Activated CD4-positive, alpha-beta T cell treated with anti-CD3 and anti-CD28 coated beads for 36 hours (primary cell): ENCODE measurements at regions of chr5 and their contacts with region 1.

Region 1: GRCh38 chr5:69334793-69335268 is 2.2 kb upstream of the CCDC125 start:
- DNase-seq: peak; percentile 91
- ATAC-seq: peak; percentile 78
- H3K4me3 Mint-ChIP-seq: no peak overlapping the region
- H3K27ac Mint-ChIP-seq: no peak overlapping the region
- H3K4me1 Mint-ChIP-seq: peaks cover 15% of the 10 kb centered on the region
- H3K27me3 Mint-ChIP-seq: no peaks in the 10 kb centered on the region

Region 2: GRCh38 chr5:68215208-68215897 is 1119.5 kb before region 1 on chr5 and contains the start of gene PIK3R1:
- CTCF ChIA-PET with region 1: no interaction called
- POLR2A ChIA-PET with region 1: no interaction called
- intact Hi-C with region 1: loop called in 1 of 2 experiments (anchors 10 kb)
- DNase-seq: peak; percentile 96
- ATAC-seq: peak; percentile 85
- H3K4me3 Mint-ChIP-seq: peak within 1 kb of the TSS; percentile 83
- H3K27ac Mint-ChIP-seq: peak within 1 kb of the TSS; percentile 97
- H3K4me1 Mint-ChIP-seq: peaks cover 45% of the 10 kb centered on the region
- H3K27me3 Mint-ChIP-seq: no peaks in the 10 kb centered on the region
- total RNA-seq, gene PIK3R1: 40.0 to 49.0 TPM

Region 3: GRCh38 chr5:69166686-69167492 is 167.9 kb before region 1 on chr5 and contains the start of gene CCNB1:
- CTCF ChIA-PET with region 1: interaction called, 3 read pairs
- POLR2A ChIA-PET with region 1: no interaction called
- intact Hi-C with region 1: loop called (anchors 1 to 10 kb)
- DNase-seq: peak; percentile 99
- ATAC-seq: peak; percentile 100
- H3K4me3 Mint-ChIP-seq: peak within 1 kb of the TSS; percentile 94
- H3K27ac Mint-ChIP-seq: peak within 1 kb of the TSS; percentile 81
- H3K4me1 Mint-ChIP-seq: peaks cover 17% of the 10 kb centered on the region
- H3K27me3 Mint-ChIP-seq: no peaks in the 10 kb centered on the region
- total RNA-seq, gene CCNB1: 163 to 205 TPM

Region 4: DNA sequence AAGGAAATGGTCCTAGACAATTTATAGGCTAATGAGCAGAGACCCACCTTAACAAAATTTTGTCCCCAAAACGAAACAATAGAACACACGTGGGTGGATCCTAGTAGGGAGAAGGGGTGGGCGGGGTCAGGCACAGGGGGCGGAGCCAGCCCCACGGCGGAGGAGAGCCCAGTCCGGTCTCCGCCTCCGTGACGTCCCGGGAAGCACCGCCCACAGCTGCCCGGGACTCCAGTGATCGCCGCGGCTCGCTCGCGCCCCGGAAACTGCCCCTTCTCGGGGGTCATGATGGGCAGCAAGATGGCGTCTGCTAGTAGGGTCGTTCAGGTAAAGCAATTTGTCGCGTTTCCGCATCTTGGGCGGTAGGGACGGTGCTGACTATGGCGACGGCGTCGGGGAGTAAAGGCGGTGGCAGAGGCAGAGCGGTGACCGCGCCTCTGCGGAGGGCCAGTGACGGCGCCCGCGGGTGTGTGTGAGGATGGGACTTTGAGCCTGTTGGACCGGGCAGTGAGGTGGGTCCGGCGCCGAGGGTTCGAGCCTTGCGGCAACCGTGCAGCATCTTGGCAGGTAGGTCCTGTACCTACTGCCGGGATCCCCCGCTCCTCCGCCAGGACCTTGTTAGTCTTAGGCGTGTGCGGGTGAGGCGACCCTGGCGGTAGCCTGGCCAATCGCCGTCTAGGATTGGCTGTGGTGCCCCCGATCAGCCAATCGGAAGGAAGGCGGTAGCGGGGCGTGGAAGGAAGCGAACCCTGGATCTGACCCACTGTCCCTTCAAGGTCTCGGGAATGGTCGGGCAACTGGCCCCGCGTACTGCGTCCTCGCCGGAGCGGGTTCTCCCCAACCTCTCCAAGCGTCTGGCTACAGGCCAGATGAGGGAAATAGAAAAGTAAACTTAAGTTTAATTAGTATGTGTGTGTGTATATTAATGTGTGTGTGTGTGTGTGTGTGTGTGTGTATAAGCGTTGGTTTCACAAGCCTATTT is 117.0 kb before region 1 on chr5:
- CTCF ChIA-PET with region 1: interaction called, 3 read pairs
- POLR2A ChIA-PET with region 1: interaction called, 4 read pairs
- intact Hi-C with region 1: loop called in 1 of 2 experiments (anchors 1 kb)
- DNase-seq: peak; percentile 97
- ATAC-seq: peak; percentile 93
- H3K4me3 Mint-ChIP-seq: peak overlapping the region; percentile 91
- H3K27ac Mint-ChIP-seq: peak overlapping the region; percentile 95
- H3K4me1 Mint-ChIP-seq: peaks cover 18% of the 10 kb centered on the region
- H3K27me3 Mint-ChIP-seq: no peaks in the 10 kb centered on the region

Region 5: DNA sequence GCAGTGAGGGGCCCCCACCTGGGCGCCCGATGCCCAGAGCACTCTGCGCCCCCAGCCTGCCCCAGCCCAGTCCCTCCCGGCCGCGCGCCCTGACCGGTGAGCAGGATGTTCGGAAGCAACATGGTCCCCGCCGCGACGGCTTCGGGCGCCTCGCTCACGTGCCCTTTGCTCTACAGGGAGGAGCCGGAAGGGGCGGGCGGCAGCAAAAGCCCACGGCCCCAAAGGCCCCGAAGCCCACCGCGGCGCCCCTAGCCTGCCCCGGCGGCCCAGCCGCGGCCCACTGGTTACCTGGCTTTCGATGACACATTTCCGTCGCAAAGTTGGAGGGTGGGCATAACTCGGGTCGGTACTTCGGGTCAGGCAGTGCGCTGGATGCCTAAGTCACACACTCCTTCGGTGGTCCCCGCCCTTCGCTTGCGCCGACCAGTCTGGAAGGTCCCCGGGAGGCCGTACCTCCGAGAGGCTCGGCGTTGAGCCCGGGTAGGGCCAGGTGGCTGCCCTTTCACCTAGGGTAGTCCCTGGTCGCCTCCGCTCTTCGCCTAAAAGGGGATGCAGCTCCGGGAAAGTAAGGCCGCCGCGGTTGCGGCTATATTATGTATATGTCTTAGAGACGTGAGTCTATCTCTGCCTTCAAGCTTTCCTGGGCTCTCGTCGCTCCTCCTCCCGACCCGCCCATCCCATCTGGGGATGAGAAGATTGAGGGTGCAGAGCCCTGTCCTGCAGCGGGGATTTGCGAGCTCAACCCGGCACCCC is 34.7 kb after region 1 on chr5 and contains the starts of genes AK6, RAD17 and TAF9:
- CTCF ChIA-PET with region 1: interaction called, 4 read pairs
- POLR2A ChIA-PET with region 1: interaction called, 5 read pairs
- intact Hi-C with region 1: loop called (anchors 1 kb)
- DNase-seq: peak; percentile 95
- ATAC-seq: peak; percentile 94
- H3K4me3 Mint-ChIP-seq: peak within 1 kb of the TSS; percentile 97
- H3K27ac Mint-ChIP-seq: peak within 1 kb of the TSS; percentile 99
- H3K4me1 Mint-ChIP-seq: peaks cover 41% of the 10 kb centered on the region
- H3K27me3 Mint-ChIP-seq: no peaks in the 10 kb centered on the region
- total RNA-seq, gene AK6: 63.2 to 93.8 TPM
- total RNA-seq, gene RAD17: 27.7 to 31.3 TPM
- total RNA-seq, gene TAF9: 67.5 to 73.8 TPM